Ovary (tissue), 10 donors: ENCODE measurements at regions of chr1 and their contacts with region 1.

Region 1: DNA sequence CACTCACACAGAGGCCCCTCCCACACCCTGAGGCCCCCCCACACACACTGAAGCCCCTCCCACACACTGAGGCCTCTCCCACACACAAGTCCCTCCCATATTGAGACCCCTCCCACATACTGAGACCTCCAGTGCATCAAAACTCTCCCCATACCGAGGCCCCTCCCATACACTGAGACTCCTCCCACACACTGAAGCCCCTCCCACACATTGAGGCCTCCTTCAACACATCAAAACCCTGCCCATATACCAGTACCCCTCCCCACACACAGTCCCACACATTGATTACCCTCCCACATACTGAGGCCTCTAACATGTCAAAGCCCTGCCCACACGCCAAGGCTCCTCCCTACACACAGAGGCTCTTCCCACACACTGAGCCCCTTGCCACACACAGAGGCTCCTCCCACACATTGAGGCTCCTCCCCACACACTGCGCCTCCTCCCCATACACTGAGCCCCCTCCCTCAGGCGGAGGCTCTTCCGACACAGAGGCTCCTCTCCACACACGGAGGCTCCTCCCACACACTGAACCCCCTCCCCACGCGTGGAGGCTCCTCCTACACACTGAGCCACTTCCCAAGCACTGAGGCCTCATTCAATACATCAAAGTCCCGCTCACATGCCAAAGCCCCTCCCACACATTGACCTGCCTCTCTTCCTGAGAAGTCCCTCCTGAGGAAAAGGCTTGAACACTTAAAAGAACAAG is 392.3 kb downstream of the CAMTA1 start:
- DNase-seq: no peak
- H3K4me3 ChIP-seq: no peak overlapping the region
- H3K27ac ChIP-seq: no peak overlapping the region
- H3K4me1 ChIP-seq: no peaks in the 10 kb centered on the region
- H3K27me3 ChIP-seq: no peaks in the 10 kb centered on the region
- CTCF ChIP-seq: no peak
- EP300 ChIP-seq: no peak
- POLR2A ChIP-seq: no peak

Region 2: GRCh38 chr1:6074192-6074901 is 1103.2 kb before region 1 on chr1:
- intact Hi-C with region 1: loop called in 1 of 4 experiments (anchors 5 kb)
- DNase-seq: no peak
- H3K4me3 ChIP-seq: no peak overlapping the region
- H3K27ac ChIP-seq: no peak overlapping the region
- H3K4me1 ChIP-seq: peaks cover 2% of the 10 kb centered on the region
- H3K27me3 ChIP-seq: no peaks in the 10 kb centered on the region
- CTCF ChIP-seq: no peak
- EP300 ChIP-seq: no peak
- POLR2A ChIP-seq: no peak